ENCODE measurements at regions of chr4 and their contacts with region 1.

Region 1: DNA sequence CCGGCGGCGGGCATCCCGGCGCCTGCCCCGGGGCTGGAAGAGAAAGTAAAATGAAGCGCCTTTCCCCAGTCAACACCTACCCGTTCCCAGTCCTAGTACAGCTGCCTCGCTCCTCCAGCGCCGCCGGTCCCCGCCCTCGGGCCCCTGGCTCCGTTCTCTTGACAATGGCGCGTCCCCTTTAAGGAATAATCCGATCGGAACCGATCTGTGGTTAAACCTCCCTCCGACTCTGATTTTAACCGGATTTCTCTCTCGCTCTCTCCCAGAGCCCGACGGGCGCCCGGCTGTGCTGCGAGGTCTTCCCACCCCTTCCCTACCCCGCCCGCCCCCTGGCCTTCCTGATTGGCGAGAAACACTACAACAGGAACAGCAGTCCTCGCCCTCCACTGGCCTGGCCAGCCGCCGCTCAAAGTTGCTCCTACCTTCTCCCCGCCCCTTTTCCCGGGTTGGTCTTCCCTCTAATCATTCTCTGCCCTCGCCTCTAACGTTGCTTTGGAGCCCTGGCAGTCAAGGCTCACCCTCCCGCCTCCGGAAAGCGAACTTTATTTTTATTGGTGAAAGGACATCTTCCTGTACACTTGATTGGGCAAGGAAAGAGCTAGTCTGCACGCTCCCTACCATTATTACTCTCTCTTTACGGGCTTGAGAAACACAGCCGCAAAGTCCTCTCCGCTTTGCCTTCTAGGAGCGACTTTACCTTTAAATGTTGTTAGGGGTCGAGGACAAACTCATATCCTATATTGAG is at the start of gene FRYL:
- DNase-seq: peak; percentile 98 to 99
- H3K4me3 ChIP-seq: peak within 1 kb of the TSS; percentile 96
- H3K4me3 Mint-ChIP-seq: peak within 1 kb of the TSS; percentile 95
- H3K27ac Mint-ChIP-seq: peak within 1 kb of the TSS; percentile 94
- H3K4me1 ChIP-seq: no peaks in the 10 kb centered on the region
- H3K4me1 Mint-ChIP-seq: no peaks in the 10 kb centered on the region
- H3K27me3 ChIP-seq: no peaks in the 10 kb centered on the region
- H3K27me3 Mint-ChIP-seq: no peaks in the 10 kb centered on the region
- CTCF ChIP-seq: no peak
- total RNA-seq, gene FRYL: 27.4 and 40.5 TPM in 2 replicates

Region 2: DNA sequence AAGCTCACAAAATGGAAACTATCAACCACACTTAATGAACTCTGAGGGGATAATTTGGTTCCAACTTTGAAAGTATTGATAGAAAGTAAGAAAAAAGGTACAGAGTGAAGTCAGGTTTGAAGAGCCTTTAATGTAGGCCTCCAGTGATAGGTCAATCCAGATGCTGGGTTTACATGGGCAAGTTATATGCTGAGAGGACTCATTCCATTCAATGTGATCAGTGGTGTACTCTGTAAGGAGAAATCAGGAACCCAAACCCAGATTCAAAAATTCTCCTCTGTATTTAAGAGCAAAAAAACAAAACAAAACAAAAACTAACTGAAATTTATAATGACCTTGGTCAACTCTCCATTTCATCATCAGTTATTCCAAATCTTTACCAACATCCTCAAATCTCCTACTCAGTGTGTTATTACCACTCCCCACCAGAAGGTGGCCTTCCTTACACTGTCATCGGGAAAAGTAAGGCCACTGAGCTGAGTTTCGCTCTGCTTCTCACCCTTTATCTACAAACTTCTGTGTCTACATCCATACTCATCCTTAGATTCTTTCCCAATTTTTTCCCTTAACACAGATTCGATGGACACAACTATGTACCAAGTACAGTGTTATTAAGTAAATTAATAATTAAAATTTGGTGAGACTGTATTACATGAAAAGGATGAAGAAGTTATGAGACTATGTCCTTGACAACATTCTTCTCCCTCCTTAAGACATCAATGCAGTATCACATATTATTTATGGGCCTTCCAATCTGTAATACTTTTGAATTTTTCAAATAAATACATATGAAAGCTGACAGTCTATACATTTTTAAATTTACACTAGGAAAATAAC is 201.8 kb before region 1 on chr4:
- CTCF ChIA-PET with region 1: interaction called, 7 read pairs
- POLR2A ChIA-PET with region 1: interaction called, 6 read pairs
- intact Hi-C with region 1: loop called (anchors 1 kb)
- DNase-seq: peak; percentile 45 to 61
- H3K4me3 ChIP-seq: no peak overlapping the region
- H3K4me3 Mint-ChIP-seq: no peak overlapping the region
- H3K27ac Mint-ChIP-seq: no peak overlapping the region
- H3K4me1 ChIP-seq: no peaks in the 10 kb centered on the region
- H3K4me1 Mint-ChIP-seq: no peaks in the 10 kb centered on the region
- H3K27me3 ChIP-seq: no peaks in the 10 kb centered on the region
- H3K27me3 Mint-ChIP-seq: no peaks in the 10 kb centered on the region
- CTCF ChIP-seq: peak; percentile 68 to 73

Region 3: GRCh38 chr4:48681856-48682255 is 98.3 kb before region 1 on chr4:
- CTCF ChIA-PET with region 1: no interaction called
- POLR2A ChIA-PET with region 1: no interaction called
- intact Hi-C with region 1: loop called (anchors 5 kb)
- DNase-seq: peak in 1 of 2 experiments; percentile 12
- H3K4me3 ChIP-seq: no peak overlapping the region
- H3K4me3 Mint-ChIP-seq: no peak overlapping the region
- H3K27ac Mint-ChIP-seq: no peak overlapping the region
- H3K4me1 ChIP-seq: peaks cover 7% of the 10 kb centered on the region; the same call in 1 of the 2 replicates
- H3K4me1 Mint-ChIP-seq: peaks cover 6% of the 10 kb centered on the region
- H3K27me3 ChIP-seq: no peaks in the 10 kb centered on the region
- H3K27me3 Mint-ChIP-seq: no peaks in the 10 kb centered on the region
- CTCF ChIP-seq: peak; percentile 22 to 42

Region 4: GRCh38 chr4:48722509-48723446 is 57.4 kb before region 1 on chr4:
- CTCF ChIA-PET with region 1: no interaction called
- POLR2A ChIA-PET with region 1: no interaction called
- intact Hi-C with region 1: loop called (anchors 10 kb)
- DNase-seq: no peak
- H3K4me3 ChIP-seq: no peak overlapping the region
- H3K4me3 Mint-ChIP-seq: no peak overlapping the region
- H3K27ac Mint-ChIP-seq: peak overlapping the region; percentile 73
- H3K4me1 ChIP-seq: peaks cover 39% of the 10 kb centered on the region
- H3K4me1 Mint-ChIP-seq: peaks cover 28% of the 10 kb centered on the region
- H3K27me3 ChIP-seq: no peaks in the 10 kb centered on the region
- H3K27me3 Mint-ChIP-seq: no peaks in the 10 kb centered on the region
- CTCF ChIP-seq: no peak

Region 5: GRCh38 chr4:48742412-48742811 is 37.8 kb before region 1 on chr4:
- CTCF ChIA-PET with region 1: no interaction called
- POLR2A ChIA-PET with region 1: no interaction called
- intact Hi-C with region 1: no loop called
- DNase-seq: no peak
- H3K4me3 ChIP-seq: no peak overlapping the region
- H3K4me3 Mint-ChIP-seq: no peak overlapping the region
- H3K27ac Mint-ChIP-seq: no peak overlapping the region
- H3K4me1 ChIP-seq: no peaks in the 10 kb centered on the region
- H3K4me1 Mint-ChIP-seq: no peaks in the 10 kb centered on the region
- H3K27me3 ChIP-seq: no peaks in the 10 kb centered on the region
- H3K27me3 Mint-ChIP-seq: no peaks in the 10 kb centered on the region
- CTCF ChIP-seq: no peak

Region 6: DNA sequence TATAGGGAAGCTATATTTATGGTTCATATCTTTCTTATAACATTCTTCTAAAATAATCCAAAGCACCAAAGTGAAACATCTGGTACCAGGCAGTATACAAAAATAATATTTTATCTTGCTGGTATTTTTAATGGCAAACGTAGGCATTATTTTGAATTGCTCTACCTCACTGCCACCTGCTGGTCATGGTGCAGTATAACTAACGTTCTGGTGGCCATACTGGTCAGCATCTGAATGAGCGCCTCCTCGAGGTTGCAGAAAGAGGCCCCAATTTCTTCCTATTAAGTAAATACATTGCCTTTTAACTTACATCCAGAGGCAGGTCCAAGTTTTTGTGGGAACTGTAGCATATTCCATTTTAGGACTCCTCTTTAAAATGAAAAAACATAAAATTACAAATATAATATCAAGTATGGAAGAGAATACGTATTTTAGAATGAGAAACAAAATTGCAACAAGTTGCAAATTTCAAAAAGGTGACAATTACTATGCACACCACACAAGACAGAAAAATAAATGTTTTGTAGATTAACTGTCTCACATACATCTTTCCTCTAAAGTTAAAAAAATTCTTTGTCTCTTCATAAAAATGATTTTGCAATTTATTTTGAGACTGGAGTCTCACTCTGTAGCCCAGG is 183.0 kb after region 1 on chr4:
- CTCF ChIA-PET with region 1: no interaction called
- POLR2A ChIA-PET with region 1: no interaction called
- intact Hi-C with region 1: loop called (anchors 2 kb)
- DNase-seq: peak; percentile 77 to 78
- H3K4me3 ChIP-seq: no peak overlapping the region
- H3K4me3 Mint-ChIP-seq: no peak overlapping the region
- H3K27ac Mint-ChIP-seq: no peak overlapping the region
- H3K4me1 ChIP-seq: no peaks in the 10 kb centered on the region
- H3K4me1 Mint-ChIP-seq: peaks cover 19% of the 10 kb centered on the region
- H3K27me3 ChIP-seq: no peaks in the 10 kb centered on the region
- H3K27me3 Mint-ChIP-seq: no peaks in the 10 kb centered on the region
- CTCF ChIP-seq: peak; percentile 89 to 94

Region 7: DNA sequence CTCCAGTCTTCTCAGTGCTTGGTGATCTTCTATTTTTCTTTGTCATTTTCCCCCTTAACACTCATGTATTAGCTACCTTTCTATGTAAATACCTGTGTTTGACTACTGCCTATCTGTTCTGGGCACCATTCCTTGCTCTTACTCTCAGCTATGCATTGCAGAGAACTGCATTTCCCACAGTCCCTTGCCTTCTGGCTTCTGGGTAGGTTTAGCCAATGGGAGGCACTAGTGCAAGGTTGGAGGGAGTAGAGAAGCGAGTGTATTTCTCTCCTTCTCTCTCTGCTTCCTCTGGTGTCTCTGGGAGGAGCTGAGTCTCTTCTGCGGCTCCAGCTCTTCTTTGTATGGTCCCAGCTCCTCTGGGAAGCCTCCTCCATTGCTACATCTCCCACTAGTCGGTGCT is 256.4 kb after region 1 on chr4:
- CTCF ChIA-PET with region 1: no interaction called
- POLR2A ChIA-PET with region 1: no interaction called
- intact Hi-C with region 1: no loop called
- DNase-seq: no peak
- H3K4me3 ChIP-seq: no peak overlapping the region
- H3K4me3 Mint-ChIP-seq: no peak overlapping the region
- H3K27ac Mint-ChIP-seq: no peak overlapping the region
- H3K4me1 ChIP-seq: no peaks in the 10 kb centered on the region
- H3K4me1 Mint-ChIP-seq: no peaks in the 10 kb centered on the region
- H3K27me3 ChIP-seq: no peaks in the 10 kb centered on the region
- H3K27me3 Mint-ChIP-seq: no peaks in the 10 kb centered on the region
- CTCF ChIP-seq: no peak